ENCODE measurements at regions of chr12 and their contacts with region 1.

Region 1: GRCh38 chr12:10190558-10191388 is 11.9 kb downstream of the TMEM52B start:
- DNase-seq: peak; percentile 27 to 47
- ATAC-seq: peak; percentile 88 to 96 (median 93)
- H3K4me3 ChIP-seq: no peak overlapping the region
- H3K27ac ChIP-seq: no peak overlapping the region
- H3K4me1 ChIP-seq: peaks cover 0 to 19% (median 0%) of the 10 kb centered on the region in 9 donors
- H3K27me3 ChIP-seq: peaks cover 0 to 8% (median 0%) of the 10 kb centered on the region in 7 donors
- CTCF ChIP-seq: peak; percentile 30 to 84 (median 75)

Region 2: DNA sequence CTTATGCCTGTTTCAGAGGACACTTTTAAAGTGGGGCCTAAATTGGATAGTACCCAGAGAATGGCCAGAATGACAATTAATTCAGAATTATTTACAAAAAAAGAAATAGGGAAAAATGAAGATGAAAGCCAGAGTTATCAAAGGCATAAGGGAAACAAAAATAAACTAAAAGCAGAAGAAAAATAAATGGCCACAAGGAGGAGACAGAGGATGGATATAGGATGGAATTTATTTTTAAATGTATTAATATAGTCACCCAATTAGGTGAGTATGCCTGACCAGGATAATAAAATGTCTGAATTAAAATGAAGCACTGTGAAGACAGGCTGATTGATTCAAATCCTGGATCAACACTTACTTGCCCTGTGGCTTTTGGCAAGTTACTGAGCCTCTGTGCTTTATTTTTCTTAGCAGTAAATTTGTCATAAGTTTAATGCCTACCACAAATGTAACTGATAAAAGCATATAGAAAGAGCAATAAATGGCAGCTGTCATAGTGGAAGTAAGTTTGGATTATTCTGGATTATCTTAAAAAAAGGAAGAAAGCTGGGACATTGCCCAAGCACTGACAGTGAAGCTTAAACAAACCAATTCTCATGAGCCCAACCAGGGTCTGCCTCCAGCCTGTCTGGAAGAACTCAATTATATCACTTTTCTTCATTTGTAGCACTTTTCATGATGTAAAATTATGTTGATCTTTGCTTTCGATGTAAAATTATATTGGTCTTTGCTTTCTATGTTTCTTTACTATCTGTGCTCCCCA is 156.8 kb before region 1 on chr12:
- intact Hi-C with region 1: loop called in 1 of 10 experiments (anchors 5 kb)
- DNase-seq: no peak
- ATAC-seq: no peak
- H3K4me3 ChIP-seq: no peak overlapping the region
- H3K27ac ChIP-seq: peak overlapping the region in 1 of 10 donors; percentile 3
- H3K4me1 ChIP-seq: peaks cover 0 to 12% (median 0%) of the 10 kb centered on the region in 9 donors
- H3K27me3 ChIP-seq: no peaks in the 10 kb centered on the region
- CTCF ChIP-seq: peak; percentile 41 to 81 (median 64)

Region 3: GRCh38 chr12:10153271-10154144 is 37.3 kb before region 1 on chr12:
- intact Hi-C with region 1: loop called (anchors 1 to 5 kb)
- DNase-seq: peak; percentile 67 to 70
- ATAC-seq: peak; percentile 90 to 95 (median 94)
- H3K4me3 ChIP-seq: peak overlapping the region; percentile 47 to 69 (median 64)
- H3K27ac ChIP-seq: peak overlapping the region in 9 of 10 donors; percentile 64 to 92 (median 83)
- H3K4me1 ChIP-seq: peaks cover 0 to 16% (median 0%) of the 10 kb centered on the region in 9 donors
- H3K27me3 ChIP-seq: no peaks in the 10 kb centered on the region
- CTCF ChIP-seq: peak; percentile 73 to 90 (median 81)

Region 4: GRCh38 chr12:10235761-10236631 is 45.2 kb after region 1 on chr12:
- intact Hi-C with region 1: no loop called
- DNase-seq: no peak
- ATAC-seq: peak in 7 of 8 donors; percentile 52 to 83 (median 82)
- H3K4me3 ChIP-seq: no peak overlapping the region
- H3K27ac ChIP-seq: no peak overlapping the region
- H3K4me1 ChIP-seq: no peaks in the 10 kb centered on the region
- H3K27me3 ChIP-seq: no peaks in the 10 kb centered on the region
- CTCF ChIP-seq: peak; percentile 77 to 93 (median 88)